ENCODE measurements at regions of chr10 and their contacts with region 1.

Region 1: GRCh38 chr10:129961157-129961701 is 2.8 kb downstream of the EBF3 start:
- DNase-seq: no peak
- H3K27ac ChIP-seq: no peak overlapping the region
- CTCF ChIP-seq: no peak

Region 2: DNA sequence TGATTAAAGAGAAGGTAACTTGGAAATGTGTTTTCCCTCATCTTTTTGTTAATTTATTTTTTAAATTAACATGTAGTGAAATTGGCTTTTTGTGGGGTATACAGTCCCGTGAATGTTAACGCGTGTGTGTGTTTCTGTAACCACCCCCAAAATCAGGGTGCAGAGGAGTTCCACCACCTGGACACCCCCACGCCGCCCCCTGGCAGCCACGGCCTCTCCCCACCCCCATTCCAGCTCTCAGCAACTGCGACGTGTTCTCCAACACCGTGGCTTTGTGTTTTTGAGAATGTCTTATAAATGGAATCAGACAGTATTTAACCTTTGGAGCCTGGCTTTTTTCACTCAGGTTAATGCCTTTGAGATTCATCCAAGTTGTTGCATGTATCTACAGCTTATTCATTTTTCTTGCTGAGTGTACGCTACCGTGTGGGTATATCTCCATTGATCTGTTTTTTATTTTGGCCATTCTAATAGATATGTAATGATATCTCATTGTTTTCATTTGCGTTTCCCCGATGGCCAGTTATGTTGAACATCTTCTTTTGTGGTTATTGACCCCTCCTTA is 216.0 kb before region 1 on chr10:
- CTCF ChIA-PET with region 1: interaction called, 10 read pairs
- POLR2A ChIA-PET with region 1: no interaction called
- DNase-seq: no peak
- H3K27ac ChIP-seq: no peak overlapping the region
- CTCF ChIP-seq: no peak